ENCODE measurements at regions of chr7 and their contacts with region 1.

Region 1: GRCh38 chr7:36048141-36048901 is 104.7 kb upstream of the EEPD1 start:
- DNase-seq: no peak
- ATAC-seq: no peak
- H3K4me3 Mint-ChIP-seq: no peak overlapping the region
- H3K27ac Mint-ChIP-seq: no peak overlapping the region
- H3K4me1 Mint-ChIP-seq: no peaks in the 10 kb centered on the region
- H3K27me3 Mint-ChIP-seq: peaks cover 3% of the 10 kb centered on the region

Region 2: GRCh38 chr7:36084475-36085097 is 36.3 kb after region 1 on chr7:
- CTCF ChIA-PET with region 1: interaction called, 5 read pairs
- POLR2A ChIA-PET with region 1: interaction called, 11 read pairs
- intact Hi-C with region 1: no loop called
- DNase-seq: no peak
- ATAC-seq: no peak
- H3K4me3 Mint-ChIP-seq: no peak overlapping the region
- H3K27ac Mint-ChIP-seq: no peak overlapping the region
- H3K4me1 Mint-ChIP-seq: no peaks in the 10 kb centered on the region
- H3K27me3 Mint-ChIP-seq: no peaks in the 10 kb centered on the region

Region 3: GRCh38 chr7:36244429-36244828 is 196.1 kb after region 1 on chr7:
- CTCF ChIA-PET with region 1: no interaction called
- POLR2A ChIA-PET with region 1: no interaction called
- intact Hi-C with region 1: no loop called
- DNase-seq: no peak
- ATAC-seq: no peak
- H3K4me3 Mint-ChIP-seq: no peak overlapping the region
- H3K27ac Mint-ChIP-seq: no peak overlapping the region
- H3K4me1 Mint-ChIP-seq: no peaks in the 10 kb centered on the region
- H3K27me3 Mint-ChIP-seq: no peaks in the 10 kb centered on the region

Region 4: GRCh38 chr7:37570145-37570544 is 1521.8 kb after region 1 on chr7:
- CTCF ChIA-PET with region 1: no interaction called
- POLR2A ChIA-PET with region 1: interaction called, 10 read pairs
- intact Hi-C with region 1: no loop called
- DNase-seq: no peak
- ATAC-seq: no peak
- H3K4me3 Mint-ChIP-seq: no peak overlapping the region
- H3K27ac Mint-ChIP-seq: no peak overlapping the region
- H3K4me1 Mint-ChIP-seq: no peaks in the 10 kb centered on the region
- H3K27me3 Mint-ChIP-seq: peaks cover 21% of the 10 kb centered on the region